ENCODE measurements at regions of chr1 and their contacts with region 1.

Region 1: GRCh38 chr1:211382714-211383480 is 56.3 kb downstream of the TRAF5 start:
- DNase-seq: peak; percentile 93 to 95
- H3K4me3 ChIP-seq: peak overlapping the region; percentile 5 to 60 (median 59)
- H3K27ac ChIP-seq: peak overlapping the region; percentile 91 to 98 (median 96)
- H3K4me1 ChIP-seq: peaks cover 0 to 4% of the 10 kb centered on the region in 2 donors
- H3K27me3 ChIP-seq: no peaks in the 10 kb centered on the region
- CTCF ChIP-seq: no peak
- POLR2A ChIP-seq: peak in 1 of 2 donors; percentile 95

Region 2: DNA sequence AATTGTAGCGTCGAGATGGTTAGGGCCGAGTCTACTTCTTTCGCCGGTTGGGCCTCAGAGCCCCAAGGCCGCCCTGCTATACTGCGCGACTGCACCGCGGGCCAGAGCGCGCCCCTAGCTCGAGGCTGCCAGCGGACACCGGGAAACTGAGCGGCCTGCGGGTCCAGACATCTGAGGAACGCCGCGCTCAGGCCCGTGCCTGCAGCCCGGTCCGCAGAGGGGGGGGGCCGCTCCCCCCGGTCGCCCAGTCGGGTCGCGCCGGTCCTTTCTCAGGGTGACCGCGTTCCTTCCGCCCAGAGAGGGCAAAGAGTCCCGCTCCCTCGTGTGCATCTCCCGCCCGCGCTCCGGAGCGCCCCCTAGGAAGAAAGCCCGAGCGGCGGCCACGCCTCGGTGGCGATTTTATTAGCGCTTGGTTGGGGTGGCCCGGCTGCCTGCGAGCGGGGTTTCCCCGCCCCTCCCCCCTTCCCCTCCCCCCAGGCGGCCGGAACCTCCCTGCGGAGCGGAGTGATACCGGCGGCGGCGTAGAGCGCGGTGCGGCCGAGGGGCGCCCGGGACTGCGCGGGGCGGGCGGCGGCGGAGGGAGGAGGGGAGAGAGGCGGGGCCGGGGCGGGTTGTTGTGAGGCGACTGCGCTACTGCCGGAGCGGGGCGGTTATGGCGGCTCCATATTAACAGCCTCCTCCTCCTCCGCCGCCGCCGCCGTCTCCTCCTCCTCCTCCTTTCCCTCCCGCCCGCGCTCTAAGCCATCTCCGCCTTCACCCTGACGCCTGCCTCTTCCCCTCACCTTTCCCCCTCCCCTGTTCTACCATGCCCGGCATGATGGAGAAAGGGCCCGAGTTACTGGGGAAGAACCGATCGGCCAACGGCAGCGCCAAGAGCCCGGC is 123.9 kb before region 1 on chr1 and contains the start of gene RCOR3:
- intact Hi-C with region 1: loop called (anchors 5 kb)
- DNase-seq: peak; percentile 93 to 95
- H3K4me3 ChIP-seq: peak within 1 kb of the TSS; percentile 51 to 98 (median 97)
- H3K27ac ChIP-seq: peak within 1 kb of the TSS; percentile 98 to 99 (median 99)
- H3K4me1 ChIP-seq: peaks cover 16 to 19% of the 10 kb centered on the region in 2 donors
- H3K27me3 ChIP-seq: no peaks in the 10 kb centered on the region
- CTCF ChIP-seq: peak in 5 of 6 experiments; percentile 11 to 49 (median 36)
- POLR2A ChIP-seq: peak; percentile 67 to 77
- total RNA-seq, gene RCOR3: 78.1 to 110 (median 102) TPM

Region 3: GRCh38 chr1:211606914-211607755 is 224.2 kb after region 1 on chr1:
- intact Hi-C with region 1: no loop called
- DNase-seq: no peak
- H3K4me3 ChIP-seq: no peak overlapping the region
- H3K27ac ChIP-seq: no peak overlapping the region
- H3K4me1 ChIP-seq: peaks cover 10 to 11% of the 10 kb centered on the region in 2 donors
- H3K27me3 ChIP-seq: no peaks in the 10 kb centered on the region
- CTCF ChIP-seq: no peak
- POLR2A ChIP-seq: no peak

Measured in thyroid gland (tissue), 4 donors.